ENCODE measurements at regions of chr1 and their contacts with region 1.

Region 1: GRCh38 chr1:222654849-222655248 is 37.0 kb downstream of the MIA3 start:
- DNase-seq: peak; percentile 73
- H3K4me3 Mint-ChIP-seq: peak overlapping the region; percentile 10
- H3K27ac Mint-ChIP-seq: peak overlapping the region; percentile 35
- H3K4me1 Mint-ChIP-seq: peaks cover 54% of the 10 kb centered on the region
- H3K27me3 Mint-ChIP-seq: no peaks in the 10 kb centered on the region

Region 2: DNA sequence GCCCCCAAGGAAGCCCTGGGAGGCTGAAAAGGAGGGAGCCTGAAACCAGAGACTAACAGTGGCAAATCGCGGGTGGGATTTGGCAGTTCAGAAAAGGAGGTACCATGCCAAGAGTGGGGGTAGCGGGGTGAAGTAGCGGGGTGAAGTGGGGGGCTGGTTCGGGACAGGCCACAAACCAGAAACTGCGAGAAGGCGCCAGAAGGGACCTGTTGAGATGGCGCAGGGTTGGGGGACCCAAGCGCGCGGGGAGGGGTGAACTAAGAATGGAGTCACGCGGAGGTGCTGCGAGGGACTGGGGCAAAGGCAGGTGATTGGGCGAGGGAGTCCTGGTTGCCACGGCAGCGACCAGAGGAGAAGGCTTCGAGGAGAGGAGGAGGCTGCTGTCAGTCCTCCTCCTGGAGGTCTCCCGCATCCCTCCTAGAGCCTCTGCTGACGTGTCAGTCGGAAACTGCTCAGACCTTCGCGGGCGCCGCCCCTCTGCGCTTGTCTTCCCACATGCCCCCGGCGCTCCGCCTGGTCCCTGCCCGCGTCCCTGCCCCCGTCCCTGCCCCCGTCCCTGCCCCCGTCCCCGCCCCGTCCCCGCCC is 37.4 kb before region 1 on chr1:
- intact Hi-C with region 1: loop called (anchors 2 kb)
- DNase-seq: peak; percentile 89
- H3K4me3 Mint-ChIP-seq: peak overlapping the region; percentile 80
- H3K27ac Mint-ChIP-seq: peak overlapping the region; percentile 75
- H3K4me1 Mint-ChIP-seq: peaks cover 25% of the 10 kb centered on the region
- H3K27me3 Mint-ChIP-seq: peaks cover 36% of the 10 kb centered on the region

Region 3: GRCh38 chr1:222713091-222713961 is 58.5 kb after region 1 on chr1:
- intact Hi-C with region 1: loop called (anchors 1 kb)
- DNase-seq: peak; percentile 81
- H3K4me3 Mint-ChIP-seq: peak overlapping the region; percentile 99
- H3K27ac Mint-ChIP-seq: peak overlapping the region; percentile 97
- H3K4me1 Mint-ChIP-seq: peaks cover 30% of the 10 kb centered on the region
- H3K27me3 Mint-ChIP-seq: no peaks in the 10 kb centered on the region

Region 4: GRCh38 chr1:223123011-223123610 is 468.3 kb after region 1 on chr1:
- intact Hi-C with region 1: loop called (anchors 5 kb)
- DNase-seq: no peak
- H3K4me3 Mint-ChIP-seq: no peak overlapping the region
- H3K27ac Mint-ChIP-seq: no peak overlapping the region
- H3K4me1 Mint-ChIP-seq: peaks cover 5% of the 10 kb centered on the region
- H3K27me3 Mint-ChIP-seq: peaks cover 4% of the 10 kb centered on the region